ENCODE measurements at regions of chr1 and their contacts with region 1.

Region 1: DNA sequence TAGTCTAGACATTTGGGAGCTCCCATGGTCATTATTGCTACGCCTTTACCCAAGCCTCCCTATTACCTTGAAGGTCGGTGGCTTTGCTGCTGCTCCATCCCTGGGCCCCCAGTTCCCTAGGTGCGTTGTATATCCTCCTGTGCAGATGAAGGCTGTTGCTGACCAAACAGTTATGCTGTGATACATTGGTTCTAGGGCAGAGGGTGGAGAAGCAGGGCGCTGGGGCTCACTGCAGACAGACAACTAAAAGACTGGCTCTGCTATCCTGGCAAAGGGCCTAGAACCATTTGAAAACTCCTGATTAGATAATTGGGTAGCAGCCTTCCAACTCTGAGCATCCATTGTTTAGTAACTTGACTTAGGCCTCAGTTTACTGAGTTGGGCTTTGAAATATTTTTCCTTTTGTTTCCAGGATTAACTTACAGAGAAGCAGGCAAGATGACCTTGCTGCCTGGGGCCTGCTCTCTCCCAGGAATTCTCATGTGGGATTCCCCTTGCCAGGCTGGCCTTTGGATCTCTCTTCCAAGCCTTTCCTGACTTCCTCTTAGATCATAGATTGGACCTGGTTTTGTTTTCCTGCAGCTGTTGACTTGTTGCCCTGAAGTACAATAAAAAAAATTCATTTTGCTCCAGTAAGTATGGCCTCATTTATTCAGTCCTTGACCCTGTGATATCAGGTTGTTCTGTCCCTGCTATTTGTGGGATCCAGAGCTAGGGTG is 15.5 kb downstream of the CHI3L2 start:
- DNase-seq: no peak
- ATAC-seq: peak; percentile 27
- H3K4me3 ChIP-seq: no peak overlapping the region
- H3K27ac ChIP-seq: no peak overlapping the region
- H3K4me1 ChIP-seq: no peaks in the 10 kb centered on the region
- H3K27me3 ChIP-seq: no peaks in the 10 kb centered on the region

Region 2: DNA sequence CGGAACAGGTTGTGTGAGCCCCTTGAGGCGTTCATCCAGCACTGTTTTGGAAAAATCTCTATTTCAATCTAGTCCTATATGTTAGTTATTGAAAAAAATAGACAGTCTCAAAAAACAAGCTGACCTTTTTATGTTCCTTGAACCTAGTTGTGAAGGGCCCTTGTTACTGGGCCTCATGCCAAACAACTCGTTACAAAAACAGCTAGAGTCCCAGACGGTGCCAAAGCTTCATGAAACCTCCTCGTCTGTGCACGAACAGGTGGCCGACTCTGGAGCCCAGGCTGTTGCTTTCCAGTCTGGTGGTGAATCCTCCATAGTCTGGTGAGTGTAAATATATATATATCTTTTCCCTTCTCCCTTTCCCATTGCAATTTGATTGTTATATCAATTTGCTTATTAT is 47.7 kb after region 1 on chr1 and contains the start of gene CHIA:
- intact Hi-C with region 1: loop called in 1 of 2 experiments (anchors 5 kb)
- DNase-seq: no peak
- ATAC-seq: no peak
- H3K4me3 ChIP-seq: no peak within 1 kb of the TSS
- H3K27ac ChIP-seq: no peak within 1 kb of the TSS
- H3K4me1 ChIP-seq: no peaks in the 10 kb centered on the region
- H3K27me3 ChIP-seq: peaks cover 0 to 2% of the 10 kb centered on the region in 2 donors
- total RNA-seq, gene CHIA: not detected

Region 3: GRCh38 chr1:111392460-111392945 is 149.5 kb after region 1 on chr1:
- intact Hi-C with region 1: loop called in 1 of 2 experiments (anchors 5 kb)
- DNase-seq: no peak
- ATAC-seq: no peak
- H3K4me3 ChIP-seq: no peak overlapping the region
- H3K27ac ChIP-seq: no peak overlapping the region
- H3K4me1 ChIP-seq: no peaks in the 10 kb centered on the region
- H3K27me3 ChIP-seq: no peaks in the 10 kb centered on the region

Region 4: GRCh38 chr1:111603979-111604378 is 361.0 kb after region 1 on chr1:
- intact Hi-C with region 1: no loop called
- DNase-seq: peak in 1 of 2 donors; percentile 56
- ATAC-seq: no peak
- H3K4me3 ChIP-seq: no peak overlapping the region
- H3K27ac ChIP-seq: no peak overlapping the region
- H3K4me1 ChIP-seq: peaks cover 0 to 2% of the 10 kb centered on the region in 2 donors
- H3K27me3 ChIP-seq: no peaks in the 10 kb centered on the region